ENCODE measurements at regions of chr5 and their contacts with region 1.

Region 1: GRCh38 chr5:172697123-172698121 is 56.4 kb downstream of the NEURL1B start:
- DNase-seq: peak; percentile 64
- ATAC-seq: peak; percentile 94
- H3K4me3 Mint-ChIP-seq: peak overlapping the region; percentile 89
- H3K27ac Mint-ChIP-seq: peak overlapping the region; percentile 84
- H3K4me1 Mint-ChIP-seq: peaks cover 19% of the 10 kb centered on the region
- H3K27me3 Mint-ChIP-seq: peaks cover 16% of the 10 kb centered on the region
- CTCF ChIP-seq: no peak

Region 2: DNA sequence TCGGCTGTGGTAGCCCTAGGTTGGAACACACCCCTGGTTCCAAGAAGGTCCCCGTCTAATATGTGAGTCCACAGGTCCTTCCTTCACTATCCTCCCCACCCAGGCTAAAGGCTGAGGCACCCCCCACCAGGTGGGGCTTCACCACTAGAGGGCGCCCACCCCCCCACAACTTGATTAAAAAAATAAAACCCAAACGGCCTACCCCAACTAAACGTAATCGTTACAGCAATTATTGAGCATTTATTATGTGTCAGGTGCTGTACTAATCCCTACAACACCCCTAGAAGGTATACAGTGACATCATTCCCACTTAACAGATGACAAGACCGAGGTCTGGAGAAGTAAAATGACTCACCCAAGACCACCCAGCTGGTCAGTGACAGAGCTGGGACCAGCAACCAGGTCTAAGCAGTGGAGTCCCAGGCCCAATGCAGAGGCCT is 1212.9 kb before region 1 on chr5:
- CTCF ChIA-PET with region 1: no interaction called
- POLR2A ChIA-PET with region 1: no interaction called
- intact Hi-C with region 1: loop called (anchors 2 kb)
- DNase-seq: peak; percentile 31
- ATAC-seq: no peak
- H3K4me3 Mint-ChIP-seq: no peak overlapping the region
- H3K27ac Mint-ChIP-seq: no peak overlapping the region
- H3K4me1 Mint-ChIP-seq: peaks cover 3% of the 10 kb centered on the region
- H3K27me3 Mint-ChIP-seq: peaks cover 26% of the 10 kb centered on the region
- CTCF ChIP-seq: peak; percentile 40

Region 3: DNA sequence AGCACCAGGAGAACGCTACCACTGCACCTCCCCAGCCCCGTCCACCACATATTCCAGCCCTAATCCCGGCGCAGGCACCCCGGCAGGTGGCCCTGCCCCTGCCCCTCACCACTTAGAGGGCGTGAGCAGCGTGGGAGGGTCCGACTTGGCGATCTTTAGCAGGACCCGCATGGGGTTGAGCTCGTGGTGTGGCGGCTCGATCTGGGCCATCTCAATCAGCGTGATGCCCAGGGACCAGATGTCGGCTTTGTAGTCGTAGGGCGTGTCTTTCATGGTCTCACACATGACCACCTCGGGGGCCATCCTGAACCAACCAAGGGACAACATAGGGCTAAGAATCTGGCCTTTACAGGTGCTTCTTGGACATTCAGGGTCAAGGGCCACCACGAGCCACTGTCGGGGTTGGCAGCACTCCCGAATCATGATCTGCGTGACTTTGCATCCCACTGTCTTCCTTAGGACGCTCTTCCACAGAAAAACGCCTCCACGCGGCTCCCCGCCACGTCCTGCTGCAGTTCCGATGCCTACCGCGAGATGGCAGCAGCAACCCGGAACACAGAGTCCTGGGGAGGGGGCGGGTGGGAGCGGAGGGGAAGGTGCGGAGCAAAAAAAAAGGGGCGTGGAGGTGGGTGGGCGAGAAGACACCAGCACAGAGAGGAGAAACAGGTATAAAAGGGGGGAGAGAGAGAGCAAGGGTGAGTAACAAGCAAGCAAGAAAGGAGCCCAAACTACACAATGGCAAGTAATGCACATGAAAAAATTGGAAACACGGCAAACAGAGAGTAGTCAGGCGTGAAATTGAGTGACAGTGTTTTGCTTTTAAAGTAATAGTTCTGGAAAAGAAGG is 590.7 kb before region 1 on chr5:
- CTCF ChIA-PET with region 1: no interaction called
- POLR2A ChIA-PET with region 1: no interaction called
- intact Hi-C with region 1: loop called (anchors 2 kb)
- DNase-seq: peak; percentile 71
- ATAC-seq: no peak
- H3K4me3 Mint-ChIP-seq: no peak overlapping the region
- H3K27ac Mint-ChIP-seq: peak overlapping the region; percentile 68
- H3K4me1 Mint-ChIP-seq: peaks cover 41% of the 10 kb centered on the region
- H3K27me3 Mint-ChIP-seq: no peaks in the 10 kb centered on the region
- CTCF ChIP-seq: peak; percentile 34

Region 4: GRCh38 chr5:172454358-172455086 is 242.9 kb before region 1 on chr5 and contains the start of gene SH3PXD2B:
- CTCF ChIA-PET with region 1: interaction called, 18 read pairs
- POLR2A ChIA-PET with region 1: no interaction called
- intact Hi-C with region 1: no loop called
- DNase-seq: peak; percentile 36
- ATAC-seq: peak; percentile 80
- H3K4me3 Mint-ChIP-seq: peak within 1 kb of the TSS; percentile 78
- H3K27ac Mint-ChIP-seq: no peak within 1 kb of the TSS
- H3K4me1 Mint-ChIP-seq: peaks cover 13% of the 10 kb centered on the region
- H3K27me3 Mint-ChIP-seq: peaks cover 55% of the 10 kb centered on the region
- CTCF ChIP-seq: no peak
- total RNA-seq, gene SH3PXD2B: 0.02 TPM in 1 of 2 replicates, not detected in the other

Region 5: DNA sequence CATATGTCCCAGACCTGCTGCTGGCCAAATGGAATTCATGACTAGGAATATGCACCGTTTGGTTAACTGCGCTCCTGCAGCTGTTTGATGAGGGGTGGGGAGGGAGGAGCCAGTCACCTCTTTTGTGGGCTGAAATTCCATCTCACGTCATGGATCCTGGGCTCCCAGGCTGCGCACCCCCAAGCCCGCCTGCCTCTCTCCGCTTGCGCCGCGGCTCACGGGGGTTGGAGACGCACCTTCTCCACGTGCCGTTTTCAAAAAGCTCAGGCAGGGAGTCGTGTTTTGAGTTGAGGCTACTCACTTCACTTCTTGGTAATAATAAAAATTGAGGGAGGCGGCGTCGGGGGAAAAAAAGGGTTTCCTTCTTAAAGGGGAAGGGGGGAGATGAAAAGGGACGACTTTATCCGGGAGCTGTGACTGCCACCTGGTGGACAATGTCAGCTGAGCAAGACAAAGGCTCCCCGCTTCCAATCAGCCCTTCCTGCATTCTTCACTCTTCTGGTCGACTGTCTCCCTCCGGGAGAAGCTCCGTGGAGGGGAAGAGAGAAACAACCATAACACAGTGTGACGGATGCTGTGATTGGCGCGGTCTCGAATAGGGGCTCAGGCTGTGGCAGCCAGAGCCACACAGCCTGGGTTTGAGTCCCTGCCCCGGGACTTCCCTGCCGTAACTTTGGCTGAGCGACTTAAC is 1275.6 kb after region 1 on chr5:
- CTCF ChIA-PET with region 1: no interaction called
- POLR2A ChIA-PET with region 1: no interaction called
- intact Hi-C with region 1: no loop called
- DNase-seq: peak; percentile 65
- ATAC-seq: peak; percentile 90
- H3K4me3 Mint-ChIP-seq: peak overlapping the region; percentile 78
- H3K27ac Mint-ChIP-seq: no peak overlapping the region
- H3K4me1 Mint-ChIP-seq: peaks cover 10% of the 10 kb centered on the region
- H3K27me3 Mint-ChIP-seq: peaks cover 25% of the 10 kb centered on the region
- CTCF ChIP-seq: peak; percentile 55

Measured in activated B cell treated with CpG ODN at 0.5 μM for 24 hours (primary cell).